Activated T-helper 1 cell treated with anti-CD3 and anti-CD28 coated beads, Interleukin-12 subunit alpha, Interleukin-12 subunit beta, Interleukin-2, Interleukin-4 antibody, amounts not matched to agents 30 ng/mL and 10 ng/mL and 1 ng/mL, durations not matched to agents 14 hours and 24 hours and 36 hours (primary cell): ENCODE measurements at regions of chr16 and their contacts with region 1.

Region 1: GRCh38 chr16:88743693-88744576 is 37.6 kb downstream of the CTU2 start:
- DNase-seq: peak; percentile 47
- H3K4me3 Mint-ChIP-seq: no peak overlapping the region
- H3K27ac Mint-ChIP-seq: no peak overlapping the region
- H3K4me1 Mint-ChIP-seq: peaks cover 10% of the 10 kb centered on the region
- H3K27me3 Mint-ChIP-seq: no peaks in the 10 kb centered on the region

Region 2: DNA sequence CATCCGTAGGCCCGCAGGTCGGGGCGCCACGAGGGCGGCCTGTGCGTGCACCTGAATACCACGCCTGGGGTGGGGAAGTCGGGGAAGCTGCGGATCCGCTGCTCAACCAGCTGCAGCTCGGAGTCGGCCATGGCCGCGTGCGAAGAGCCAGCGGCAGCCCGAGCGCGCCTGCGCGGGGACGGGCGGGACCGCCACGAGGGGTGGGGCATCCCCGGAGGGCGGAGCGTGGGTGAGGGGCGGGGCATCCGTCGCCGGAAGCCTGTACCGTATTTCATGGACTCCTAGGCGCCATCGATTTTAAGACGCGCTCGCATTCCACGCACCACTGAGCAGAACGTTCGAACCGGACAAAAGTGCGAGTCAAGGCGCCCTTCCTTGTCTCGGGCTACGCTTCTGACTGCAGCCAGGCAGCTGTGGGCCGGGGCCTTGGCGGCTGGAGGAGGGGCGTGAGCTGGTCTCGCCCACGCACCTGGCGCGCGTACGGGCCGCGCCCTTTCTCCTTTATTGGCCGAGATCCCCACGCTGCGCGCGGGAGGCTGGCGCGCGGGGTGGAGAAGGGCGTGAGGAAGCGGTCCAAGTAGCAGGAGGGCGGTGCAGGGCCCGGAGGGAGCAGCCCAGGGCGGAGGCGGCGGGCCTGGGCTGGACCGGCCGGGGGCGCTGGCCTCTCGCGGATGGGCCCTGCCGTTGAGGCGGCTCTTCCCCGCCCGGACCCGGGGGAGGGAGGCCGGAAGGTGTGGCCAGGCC is 68.0 kb after region 1 on chr16 and contains the start of gene APRT:
- intact Hi-C with region 1: loop called (anchors 2 kb)
- DNase-seq: peak; percentile 97
- H3K4me3 Mint-ChIP-seq: peak within 1 kb of the TSS; percentile 90
- H3K27ac Mint-ChIP-seq: peak within 1 kb of the TSS; percentile 98
- H3K4me1 Mint-ChIP-seq: peaks cover 11% of the 10 kb centered on the region
- H3K27me3 Mint-ChIP-seq: no peaks in the 10 kb centered on the region
- total RNA-seq, gene APRT: 301 and 303 TPM in 2 replicates

Region 3: GRCh38 chr16:88957887-88958577 is 214.1 kb after region 1 on chr16:
- intact Hi-C with region 1: no loop called
- DNase-seq: no peak
- H3K4me3 Mint-ChIP-seq: peak overlapping the region; percentile 46
- H3K27ac Mint-ChIP-seq: peak overlapping the region; percentile 23
- H3K4me1 Mint-ChIP-seq: peaks cover 14% of the 10 kb centered on the region
- H3K27me3 Mint-ChIP-seq: peaks cover 10% of the 10 kb centered on the region